Cardiac septum (tissue), 1 donor: ENCODE measurements at regions of chr10 and their contacts with region 1.

Region 1: DNA sequence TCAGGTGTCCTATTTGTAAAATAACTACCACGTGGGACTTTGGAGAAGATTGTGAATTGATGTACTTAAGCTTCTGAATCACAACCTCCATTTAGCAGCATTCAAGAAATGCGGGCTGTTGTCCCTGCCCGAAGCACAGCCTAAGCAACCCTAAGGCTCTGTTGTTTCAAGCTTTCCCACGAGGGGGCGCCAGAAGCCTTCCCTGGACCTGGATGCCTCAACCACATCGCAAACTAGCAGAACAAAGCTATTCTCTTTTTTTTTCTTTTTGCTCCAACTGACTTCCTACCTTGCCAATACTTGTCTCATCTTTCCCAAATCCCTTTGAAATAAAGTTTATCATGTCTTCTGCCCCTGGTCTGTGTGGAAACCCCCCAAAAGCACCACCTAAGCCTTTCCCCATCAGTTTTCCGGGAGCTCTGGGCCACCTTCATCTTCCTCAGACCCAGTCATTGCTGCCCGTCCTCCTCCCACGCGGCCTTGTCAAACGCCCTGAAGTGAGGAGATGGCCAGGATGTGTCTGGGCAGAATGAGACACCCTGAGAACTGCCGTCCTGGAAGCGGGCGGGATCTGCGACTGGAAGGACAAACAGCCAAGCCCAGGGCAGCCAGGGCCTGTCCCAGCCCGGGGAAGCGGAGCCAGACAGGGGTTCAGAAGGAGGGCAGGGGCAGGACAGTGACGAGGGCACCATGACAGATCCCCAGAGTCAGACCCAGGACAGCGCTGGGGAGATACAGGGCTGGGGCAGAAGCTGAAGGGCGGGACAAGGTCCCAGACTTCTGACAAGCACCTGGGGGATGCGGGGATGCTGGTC is 112.7 kb downstream of the SLIT1 start:
- DNase-seq: peak; percentile 90

Region 2: GRCh38 chr10:97117372-97117771 is 44.3 kb after region 1 on chr10:
- intact Hi-C with region 1: loop called (anchors 1 kb)
- DNase-seq: no peak

Region 3: GRCh38 chr10:97210543-97210961 is 137.5 kb after region 1 on chr10:
- intact Hi-C with region 1: loop called (anchors 2 kb)
- DNase-seq: no peak

Region 4: GRCh38 chr10:97412891-97413304 is 339.8 kb after region 1 on chr10:
- intact Hi-C with region 1: no loop called
- DNase-seq: no peak

Region 5: GRCh38 chr10:97542169-97543024 is 469.3 kb after region 1 on chr10:
- intact Hi-C with region 1: no loop called
- DNase-seq: peak; percentile 83